Activated CD4-positive, alpha-beta T cell treated with anti-CD3 and anti-CD28 coated beads for 36 hours (primary cell): ENCODE measurements at regions of chrX and their contacts with region 1.

Region 1: GRCh38 chrX:148609515-148610327 is 109.3 kb downstream of the AFF2 start:
- DNase-seq: peak; percentile 3
- ATAC-seq: peak; percentile 76
- H3K4me3 Mint-ChIP-seq: no peak overlapping the region
- H3K27ac Mint-ChIP-seq: no peak overlapping the region
- H3K4me1 Mint-ChIP-seq: peaks cover 24% of the 10 kb centered on the region
- H3K27me3 Mint-ChIP-seq: no peaks in the 10 kb centered on the region

Region 2: GRCh38 chrX:148282504-148282903 is 327.2 kb before region 1 on chrX:
- CTCF ChIA-PET with region 1: no interaction called
- POLR2A ChIA-PET with region 1: no interaction called
- intact Hi-C with region 1: loop called in 1 of 2 experiments (anchors 10 kb)
- DNase-seq: no peak
- ATAC-seq: peak; percentile 65
- H3K4me3 Mint-ChIP-seq: no peak overlapping the region
- H3K27ac Mint-ChIP-seq: peak overlapping the region; percentile 37
- H3K4me1 Mint-ChIP-seq: peaks cover 31% of the 10 kb centered on the region
- H3K27me3 Mint-ChIP-seq: no peaks in the 10 kb centered on the region

Region 3: GRCh38 chrX:149274516-149275105 is 664.9 kb after region 1 on chrX:
- CTCF ChIA-PET with region 1: no interaction called
- POLR2A ChIA-PET with region 1: no interaction called
- intact Hi-C with region 1: loop called in 1 of 2 experiments (anchors 10 kb)
- DNase-seq: no peak
- ATAC-seq: no peak
- H3K4me3 Mint-ChIP-seq: no peak overlapping the region
- H3K27ac Mint-ChIP-seq: no peak overlapping the region
- H3K4me1 Mint-ChIP-seq: no peaks in the 10 kb centered on the region
- H3K27me3 Mint-ChIP-seq: peaks cover 14% of the 10 kb centered on the region